HEK293 (cell line): ENCODE measurements at regions of chr10 and their contacts with region 1.

Region 1: DNA sequence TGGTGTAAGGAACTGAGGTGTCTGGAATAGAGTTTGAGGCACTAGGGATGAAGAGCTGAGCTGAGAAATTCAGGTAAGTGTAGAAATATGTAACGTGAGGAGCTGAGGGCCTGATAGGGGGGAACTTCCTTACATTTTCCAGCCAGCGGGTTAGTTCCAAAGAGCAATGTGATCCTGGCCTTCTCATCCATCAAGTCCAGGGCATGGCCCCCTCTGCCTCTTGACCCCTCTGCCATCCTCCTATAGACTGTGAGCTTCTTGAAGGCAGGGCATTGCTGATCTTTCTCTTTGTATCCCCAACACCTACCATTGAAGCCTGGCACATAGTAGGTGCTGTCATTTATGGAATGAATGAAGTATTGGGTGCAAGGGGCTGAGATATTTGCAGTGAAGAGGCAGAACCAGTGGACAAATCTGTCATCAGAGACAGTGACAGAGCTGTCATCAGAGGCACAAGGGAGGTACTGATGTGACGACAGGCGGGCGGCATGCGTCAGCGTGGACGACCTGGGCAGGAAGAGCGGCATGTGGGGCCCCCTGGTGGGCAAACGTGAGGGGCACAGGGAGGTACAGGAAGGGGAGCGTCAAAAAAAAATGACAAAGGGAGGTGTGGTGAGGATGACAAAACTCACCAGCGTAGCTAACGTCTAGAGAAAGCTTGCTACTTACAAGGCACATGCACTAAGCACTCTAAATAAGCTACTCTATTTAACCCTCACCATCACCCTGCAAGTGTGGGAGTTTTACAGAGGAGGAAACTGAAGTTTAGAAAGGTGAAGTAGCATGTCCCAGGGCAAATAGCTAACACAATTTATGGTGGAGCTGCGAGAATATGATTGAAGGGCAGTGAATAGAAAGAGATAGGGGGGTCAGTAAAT is 5.2 kb upstream of the CAMK2G start:
- H3K4me3 ChIP-seq: no peak overlapping the region
- H3K27ac ChIP-seq: no peak overlapping the region
- H3K4me1 ChIP-seq: no peaks in the 10 kb centered on the region
- CTCF ChIP-seq: peak; percentile 96

Region 2: GRCh38 chr10:73810735-73811465 is 68.6 kb before region 1 on chr10:
- CTCF ChIA-PET with region 1: interaction called, 13 read pairs
- POLR2A ChIA-PET with region 1: no interaction called
- H3K4me3 ChIP-seq: peak overlapping the region; percentile 78
- H3K27ac ChIP-seq: peak overlapping the region; percentile 73
- H3K4me1 ChIP-seq: no peaks in the 10 kb centered on the region
- CTCF ChIP-seq: no peak

Region 3: GRCh38 chr10:73857446-73857845 is 22.1 kb before region 1 on chr10:
- CTCF ChIA-PET with region 1: interaction called, 267 read pairs
- POLR2A ChIA-PET with region 1: interaction called, 4 read pairs
- H3K4me3 ChIP-seq: no peak overlapping the region
- H3K27ac ChIP-seq: no peak overlapping the region
- H3K4me1 ChIP-seq: peaks cover 6% of the 10 kb centered on the region; the same call in 1 of the 2 replicates
- CTCF ChIP-seq: no peak

Region 4: GRCh38 chr10:73899423-73899822 is 19.9 kb after region 1 on chr10:
- CTCF ChIA-PET with region 1: interaction called, 10 read pairs
- POLR2A ChIA-PET with region 1: no interaction called
- H3K4me3 ChIP-seq: no peak overlapping the region
- H3K27ac ChIP-seq: no peak overlapping the region
- H3K4me1 ChIP-seq: no peaks in the 10 kb centered on the region
- CTCF ChIP-seq: no peak

Region 5: DNA sequence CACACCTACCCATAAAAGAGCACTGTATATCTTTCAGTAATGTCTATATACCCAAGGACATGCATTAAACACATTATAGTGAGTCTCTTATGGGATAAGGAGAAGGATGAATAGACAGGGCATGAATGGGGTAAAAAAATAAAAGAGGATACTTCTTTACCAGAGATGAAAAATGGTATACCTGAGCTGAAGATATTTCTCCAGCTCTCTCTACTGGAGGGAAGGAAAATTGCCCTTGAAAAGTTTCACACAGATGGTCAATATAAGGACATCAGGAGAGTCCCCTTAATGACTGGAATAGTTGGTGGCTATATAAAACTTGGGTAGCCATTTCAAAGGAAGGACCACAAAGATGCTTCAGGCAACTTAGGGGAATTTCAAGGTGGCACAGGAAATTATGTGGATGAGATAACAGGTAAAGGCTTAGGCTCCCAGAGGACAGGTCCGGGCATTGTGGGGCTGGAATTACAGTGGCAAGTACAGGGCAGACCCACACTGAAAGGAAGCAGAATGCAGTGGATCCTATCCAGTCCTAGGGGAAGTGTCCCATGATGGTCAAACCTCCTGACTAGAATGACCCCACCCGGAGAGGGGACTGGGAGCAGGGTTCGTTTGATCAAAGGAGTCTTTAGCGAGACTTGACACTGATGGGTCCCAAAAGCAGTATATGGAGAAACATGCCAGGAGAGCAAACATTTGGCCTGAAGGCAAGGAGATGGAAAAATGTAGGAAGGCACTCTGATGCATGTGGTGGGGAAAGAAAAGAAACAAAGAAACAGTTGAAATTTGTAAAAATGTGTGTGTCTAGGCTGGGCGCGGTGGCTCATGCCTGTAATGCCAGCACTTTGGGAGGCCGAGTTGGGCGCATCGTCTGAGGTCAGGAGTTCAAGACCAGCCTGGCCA is 67.0 kb after region 1 on chr10:
- CTCF ChIA-PET with region 1: interaction called, 29 read pairs
- POLR2A ChIA-PET with region 1: no interaction called
- H3K4me3 ChIP-seq: no peak overlapping the region
- H3K27ac ChIP-seq: no peak overlapping the region
- H3K4me1 ChIP-seq: no peaks in the 10 kb centered on the region
- CTCF ChIP-seq: no peak